Sigmoid colon (tissue), 7 donors: ENCODE measurements at regions of chr15 and their contacts with region 1.

Region 1: GRCh38 chr15:94670438-94671034 is 439.2 kb downstream of the MCTP2 start:
- DNase-seq: no peak
- H3K4me3 ChIP-seq: no peak overlapping the region
- H3K27ac ChIP-seq: peak overlapping the region in 2 of 4 donors; percentile 14 to 51
- H3K4me1 ChIP-seq: peaks cover 0 to 22% (median 14%) of the 10 kb centered on the region in 4 donors
- H3K27me3 ChIP-seq: no peaks in the 10 kb centered on the region
- CTCF ChIP-seq: peak; percentile 47 to 64 (median 55)
- EP300 ChIP-seq: no peak
- POLR2A ChIP-seq: no peak

Region 2: DNA sequence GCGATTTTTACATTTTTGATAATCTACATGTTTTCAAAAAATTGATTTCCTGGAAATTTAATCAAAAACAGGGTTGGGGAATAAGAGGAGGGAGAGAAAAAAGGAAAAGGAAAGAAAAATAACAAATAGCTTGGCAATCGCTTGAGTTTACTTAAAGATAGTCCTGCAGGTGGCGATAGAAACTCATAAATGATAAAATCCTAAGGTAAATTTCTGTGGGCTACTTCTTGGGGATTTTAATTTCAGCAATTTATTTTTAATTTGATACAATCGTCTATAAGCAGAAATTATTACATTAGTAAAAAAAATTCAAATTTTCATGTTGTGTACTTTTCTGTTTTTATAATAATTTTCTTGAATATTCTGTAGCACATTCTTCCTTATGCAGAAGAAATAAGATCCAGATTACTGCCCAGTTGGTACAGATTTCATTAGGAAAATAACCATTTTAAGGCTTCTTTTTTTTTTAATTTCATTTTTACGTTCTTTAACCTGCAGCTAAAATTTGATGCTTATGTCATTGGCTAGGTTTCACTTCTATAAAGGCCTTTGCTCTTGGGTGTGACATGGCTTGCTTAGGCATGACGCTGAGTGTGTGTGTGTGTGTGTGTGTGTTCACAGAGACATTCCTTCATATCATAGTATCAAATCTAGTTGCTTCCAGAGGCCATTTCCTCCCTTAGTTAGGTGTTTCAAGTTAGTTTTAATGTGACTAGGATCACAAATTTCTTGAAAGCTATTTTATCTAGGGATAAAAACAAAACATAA is 257.4 kb before region 1 on chr15:
- intact Hi-C with region 1: loop called (anchors 5 kb)
- DNase-seq: no peak
- H3K4me3 ChIP-seq: no peak overlapping the region
- H3K27ac ChIP-seq: peak overlapping the region in 1 of 4 donors; percentile 33
- H3K4me1 ChIP-seq: peaks cover 0 to 71% (median 12%) of the 10 kb centered on the region in 4 donors
- H3K27me3 ChIP-seq: no peaks in the 10 kb centered on the region
- CTCF ChIP-seq: peak; percentile 23 to 54 (median 50)
- EP300 ChIP-seq: no peak
- POLR2A ChIP-seq: no peak

Region 3: GRCh38 chr15:94844538-94845389 is 174.2 kb after region 1 on chr15:
- intact Hi-C with region 1: loop called (anchors 10 kb)
- DNase-seq: peak; percentile 79
- H3K4me3 ChIP-seq: peak overlapping the region; percentile 7 to 54 (median 46)
- H3K27ac ChIP-seq: peak overlapping the region; percentile 62 to 76 (median 68)
- H3K4me1 ChIP-seq: peaks cover 0 to 11% (median 0%) of the 10 kb centered on the region in 4 donors
- H3K27me3 ChIP-seq: peaks cover 0 to 3% (median 0%) of the 10 kb centered on the region in 3 donors
- CTCF ChIP-seq: no peak
- EP300 ChIP-seq: no peak
- POLR2A ChIP-seq: no peak